Heart left ventricle (tissue), 16 donors: ENCODE measurements at regions of chr7 and their contacts with region 1.

Region 1: DNA sequence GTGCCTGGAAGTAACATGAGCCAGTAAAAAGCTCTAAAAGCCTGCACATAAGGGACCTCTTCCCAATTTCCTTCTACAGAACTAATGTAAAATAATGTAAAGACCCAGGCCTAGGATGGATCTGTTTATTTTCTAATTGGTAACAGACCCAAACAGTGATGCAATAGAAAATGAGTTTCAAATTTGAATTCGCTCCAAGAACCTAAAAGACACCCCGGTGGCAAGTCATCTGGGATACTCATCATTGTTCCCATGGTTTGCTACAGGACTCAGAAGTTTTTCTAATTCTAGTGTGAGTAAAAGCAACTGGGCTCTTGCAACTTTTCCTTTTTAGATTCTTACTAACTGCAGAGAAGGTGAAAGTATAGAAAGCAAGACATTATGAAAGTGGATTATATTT is 271.3 kb upstream of the CACNA2D1 start:
- DNase-seq: no peak
- ATAC-seq: no peak
- H3K4me3 ChIP-seq: no peak overlapping the region
- H3K27ac ChIP-seq: no peak overlapping the region
- H3K4me1 ChIP-seq: no peaks in the 10 kb centered on the region
- H3K27me3 ChIP-seq: no peaks in the 10 kb centered on the region
- CTCF ChIP-seq: no peak
- POLR2A ChIP-seq: no peak

Region 2: GRCh38 chr7:82631998-82632397 is 82.9 kb before region 1 on chr7:
- intact Hi-C with region 1: loop called in 1 of 10 experiments (anchors 10 kb)
- DNase-seq: no peak
- ATAC-seq: no peak
- H3K4me3 ChIP-seq: no peak overlapping the region
- H3K27ac ChIP-seq: no peak overlapping the region
- H3K4me1 ChIP-seq: no peaks in the 10 kb centered on the region
- H3K27me3 ChIP-seq: no peaks in the 10 kb centered on the region
- CTCF ChIP-seq: no peak
- POLR2A ChIP-seq: no peak